CD4-positive, alpha-beta memory T cell (primary cell): ENCODE measurements at regions of chr19 and their contacts with region 1.

Region 1: GRCh38 chr19:2475702-2476450 is at the start of gene GADD45B:
- DNase-seq: peak; percentile 96 to 98 (median 96)
- H3K4me3 ChIP-seq: peak within 1 kb of the TSS; percentile 71 to 97
- H3K4me3 Mint-ChIP-seq: peak within 1 kb of the TSS; percentile 99 to 100 (median 100)
- H3K27ac ChIP-seq: peak within 1 kb of the TSS; percentile 76
- H3K27ac Mint-ChIP-seq: peak within 1 kb of the TSS; percentile 95 to 99 (median 97)
- H3K4me1 ChIP-seq: peaks cover 25% of the 10 kb centered on the region
- H3K4me1 Mint-ChIP-seq: peaks cover 6 to 36% (median 14%) of the 10 kb centered on the region in 4 donors
- H3K27me3 ChIP-seq: no peaks in the 10 kb centered on the region
- H3K27me3 Mint-ChIP-seq: no peaks in the 10 kb centered on the region
- total RNA-seq, gene GADD45B: 88.2 to 88.3 TPM

Region 2: GRCh38 chr19:2151339-2152229 is 324.3 kb before region 1 on chr19 and contains the start of gene AP3D1:
- CTCF ChIA-PET with region 1: no interaction called
- POLR2A ChIA-PET with region 1: interaction called, 3 read pairs
- intact Hi-C with region 1: loop called (anchors 5 kb)
- DNase-seq: peak; percentile 100
- H3K4me3 ChIP-seq: peak within 1 kb of the TSS; percentile 42 to 83
- H3K4me3 Mint-ChIP-seq: peak within 1 kb of the TSS; percentile 76 to 89 (median 84)
- H3K27ac ChIP-seq: peak within 1 kb of the TSS; percentile 94
- H3K27ac Mint-ChIP-seq: peak within 1 kb of the TSS; percentile 89 to 98 (median 95)
- H3K4me1 ChIP-seq: peaks cover 42% of the 10 kb centered on the region
- H3K4me1 Mint-ChIP-seq: peaks cover 23 to 43% (median 35%) of the 10 kb centered on the region in 4 donors
- H3K27me3 ChIP-seq: no peaks in the 10 kb centered on the region
- H3K27me3 Mint-ChIP-seq: no peaks in the 10 kb centered on the region
- total RNA-seq, gene AP3D1: 80.6 to 87.2 TPM

Region 3: DNA sequence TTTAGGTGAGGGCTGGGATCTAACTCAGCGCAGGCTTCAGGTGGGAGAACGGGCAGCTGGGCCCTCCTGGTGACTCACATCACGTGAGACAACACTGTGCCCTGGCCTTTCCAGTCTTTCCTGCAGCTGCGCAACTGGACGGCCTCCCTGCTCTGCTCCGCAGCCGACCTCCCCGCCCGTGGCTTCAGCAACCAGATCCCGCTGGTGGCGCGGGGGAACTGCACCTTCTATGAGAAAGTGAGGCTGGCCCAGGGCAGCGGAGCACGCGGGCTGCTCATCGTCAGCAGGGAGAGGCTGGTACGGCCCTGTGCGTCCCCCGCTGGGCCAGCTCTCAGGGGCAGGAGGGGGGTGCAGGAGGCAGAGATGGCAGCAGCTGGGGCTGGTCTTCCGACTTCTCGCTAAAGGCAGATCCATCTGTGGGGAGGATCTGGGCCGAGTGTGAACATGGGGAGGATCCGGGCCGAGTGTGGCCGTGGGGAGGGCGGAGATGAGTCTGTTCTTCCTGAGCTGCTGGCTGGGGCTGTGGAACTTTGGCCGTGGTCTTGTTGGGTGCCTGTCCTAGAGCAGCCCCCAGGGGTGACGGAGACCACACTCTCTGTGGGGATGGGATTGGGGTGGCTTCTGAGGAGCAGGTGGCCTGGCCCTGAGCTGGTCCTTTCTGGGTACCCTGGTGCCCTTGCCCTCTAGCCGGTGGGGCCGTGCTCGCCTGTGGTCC is 138.4 kb before region 1 on chr19:
- CTCF ChIA-PET with region 1: no interaction called
- POLR2A ChIA-PET with region 1: no interaction called
- intact Hi-C with region 1: no loop called
- DNase-seq: peak in 1 of 5 donors; percentile 35
- H3K4me3 ChIP-seq: no peak overlapping the region
- H3K4me3 Mint-ChIP-seq: no peak overlapping the region
- H3K27ac ChIP-seq: no peak overlapping the region
- H3K27ac Mint-ChIP-seq: no peak overlapping the region
- H3K4me1 ChIP-seq: peaks cover under 1% of the 10 kb centered on the region
- H3K4me1 Mint-ChIP-seq: peaks cover 7 to 15% (median 10%) of the 10 kb centered on the region in 4 donors
- H3K27me3 ChIP-seq: no peaks in the 10 kb centered on the region
- H3K27me3 Mint-ChIP-seq: no peaks in the 10 kb centered on the region

Region 4: GRCh38 chr19:2455851-2456570 is 19.9 kb before region 1 on chr19:
- CTCF ChIA-PET with region 1: no interaction called
- POLR2A ChIA-PET with region 1: interaction called, 45 read pairs
- intact Hi-C with region 1: loop called (anchors 2 kb)
- DNase-seq: peak in 4 of 5 donors; percentile 18 to 79 (median 34)
- H3K4me3 ChIP-seq: peak overlapping the region; percentile 34 to 70
- H3K4me3 Mint-ChIP-seq: peak overlapping the region; percentile 79 to 92 (median 86)
- H3K27ac ChIP-seq: peak overlapping the region; percentile 87
- H3K27ac Mint-ChIP-seq: peak overlapping the region; percentile 76 to 95 (median 87)
- H3K4me1 ChIP-seq: peaks cover 24% of the 10 kb centered on the region
- H3K4me1 Mint-ChIP-seq: peaks cover 6 to 23% (median 13%) of the 10 kb centered on the region in 4 donors
- H3K27me3 ChIP-seq: no peaks in the 10 kb centered on the region
- H3K27me3 Mint-ChIP-seq: no peaks in the 10 kb centered on the region

Region 5: DNA sequence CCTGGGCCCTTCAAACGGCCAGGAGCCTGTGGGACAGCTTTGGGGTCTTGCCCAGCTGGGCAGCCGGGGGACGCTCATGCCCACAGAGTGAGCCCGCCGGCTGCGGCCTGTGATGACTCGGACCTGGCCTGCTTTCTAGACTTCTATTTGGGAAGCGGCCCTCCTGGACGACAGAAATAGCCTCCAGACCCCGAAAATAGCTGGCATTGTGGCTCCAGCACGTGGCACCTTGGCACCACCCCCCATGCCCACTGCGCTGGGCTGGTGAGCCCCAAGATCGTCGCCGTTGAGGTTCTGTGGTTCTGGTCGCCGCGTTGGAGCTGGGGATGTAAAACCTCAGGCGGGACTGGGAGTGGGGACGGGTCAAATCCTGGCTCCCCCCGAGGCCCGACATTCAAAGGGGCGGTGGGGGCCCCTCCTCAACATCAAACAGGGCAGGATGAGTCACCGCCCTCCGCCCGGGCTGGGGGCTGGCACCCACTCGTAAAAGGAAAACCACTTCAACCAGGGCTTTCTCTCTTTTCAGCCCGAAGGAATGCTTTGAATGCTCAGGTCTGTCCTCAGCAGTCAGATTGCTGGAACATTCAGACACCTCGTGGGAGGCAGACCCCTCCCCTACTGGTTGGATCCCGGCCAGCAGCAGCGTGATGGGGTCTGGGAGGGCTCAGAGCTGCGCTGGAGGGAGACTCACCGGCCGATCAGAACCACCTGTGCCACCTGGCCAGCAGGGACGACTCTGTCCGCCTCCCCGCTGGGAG is 42.2 kb after region 1 on chr19:
- CTCF ChIA-PET with region 1: no interaction called
- POLR2A ChIA-PET with region 1: interaction called, 16 read pairs
- intact Hi-C with region 1: no loop called
- DNase-seq: no peak
- H3K4me3 ChIP-seq: no peak overlapping the region
- H3K4me3 Mint-ChIP-seq: no peak overlapping the region
- H3K27ac ChIP-seq: no peak overlapping the region
- H3K27ac Mint-ChIP-seq: peak overlapping the region in 1 of 7 donors; percentile 22
- H3K4me1 ChIP-seq: peaks cover 9% of the 10 kb centered on the region
- H3K4me1 Mint-ChIP-seq: peaks cover 0 to 10% (median 2%) of the 10 kb centered on the region in 4 donors
- H3K27me3 ChIP-seq: no peaks in the 10 kb centered on the region
- H3K27me3 Mint-ChIP-seq: no peaks in the 10 kb centered on the region

Region 6: DNA sequence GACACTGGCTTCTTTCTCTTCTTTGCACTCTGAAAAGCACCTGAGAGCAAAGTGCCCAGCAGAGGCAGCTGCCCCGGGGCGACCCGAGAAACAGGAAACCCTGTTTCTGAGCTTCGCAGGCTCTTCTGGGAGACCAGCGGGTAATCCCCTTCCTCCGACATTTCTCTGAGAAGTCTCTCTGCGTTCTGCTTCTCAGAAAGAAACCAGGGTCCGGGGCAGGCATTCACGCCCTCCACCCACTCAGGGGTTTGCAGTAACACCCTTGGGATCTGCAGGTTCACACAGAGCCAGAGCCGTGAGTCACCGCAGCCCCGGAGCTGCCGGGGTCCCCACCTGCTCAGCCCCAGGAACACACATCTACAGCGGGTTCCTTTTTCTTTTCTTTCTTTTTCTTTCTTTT is 86.0 kb after region 1 on chr19:
- CTCF ChIA-PET with region 1: interaction called, 8 read pairs
- POLR2A ChIA-PET with region 1: interaction called, 81 read pairs
- intact Hi-C with region 1: loop called (anchors 1 kb)
- DNase-seq: peak; percentile 60 to 81 (median 69)
- H3K4me3 ChIP-seq: peak overlapping the region; percentile 48 to 75
- H3K4me3 Mint-ChIP-seq: peak overlapping the region; percentile 90 to 98 (median 94)
- H3K27ac ChIP-seq: peak overlapping the region; percentile 64
- H3K27ac Mint-ChIP-seq: peak overlapping the region; percentile 93 to 97 (median 95)
- H3K4me1 ChIP-seq: peaks cover 15% of the 10 kb centered on the region
- H3K4me1 Mint-ChIP-seq: peaks cover 8 to 26% (median 14%) of the 10 kb centered on the region in 4 donors
- H3K27me3 ChIP-seq: no peaks in the 10 kb centered on the region
- H3K27me3 Mint-ChIP-seq: peaks cover 0 to 1% of the 10 kb centered on the region in 2 donors

Region 7: DNA sequence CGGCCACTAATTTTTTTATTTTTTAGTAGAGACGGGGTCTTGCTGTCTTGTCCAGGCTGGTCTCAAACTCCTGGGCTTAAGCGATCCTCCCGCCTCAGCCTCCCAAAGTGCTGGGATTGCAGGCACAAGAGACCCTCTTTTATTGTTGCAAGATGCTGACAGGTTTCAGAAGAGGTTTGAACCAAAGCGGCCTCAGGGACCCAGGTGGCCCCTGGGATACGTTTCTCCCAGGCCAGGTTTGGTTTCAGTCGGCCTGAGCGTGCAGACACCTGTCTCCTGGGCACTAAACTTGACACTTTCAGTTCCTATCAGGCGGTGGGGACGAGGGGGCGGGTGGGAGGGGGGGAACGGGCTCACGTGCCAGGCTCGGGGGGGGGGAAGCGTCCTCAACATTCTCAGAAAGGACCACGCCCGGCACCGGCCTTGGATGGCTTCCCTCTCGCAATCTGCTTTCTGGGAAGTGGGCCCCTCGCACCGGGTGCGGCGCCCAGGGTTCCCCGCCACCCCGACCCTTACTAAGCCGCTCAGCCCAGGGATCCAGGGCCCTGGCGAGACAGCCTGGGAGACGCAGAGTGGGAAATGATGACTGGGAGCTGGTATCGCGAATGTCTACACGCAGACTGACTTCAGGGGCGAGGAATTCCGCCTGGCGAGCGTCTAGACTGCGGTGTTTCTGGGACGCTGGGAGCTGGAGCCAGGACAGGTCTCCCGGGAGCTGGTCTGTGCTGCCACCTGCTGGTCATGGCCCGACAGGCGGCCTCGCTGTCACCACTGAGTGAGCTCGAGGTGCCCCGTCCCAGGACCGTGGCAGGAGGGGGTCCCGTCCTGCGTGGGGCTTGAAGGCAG is 135.0 kb after region 1 on chr19:
- CTCF ChIA-PET with region 1: interaction called, 123 read pairs
- POLR2A ChIA-PET with region 1: interaction called, 258 read pairs
- intact Hi-C with region 1: loop called (anchors 1 kb)
- DNase-seq: peak; percentile 76 to 87 (median 81)
- H3K4me3 ChIP-seq: peak overlapping the region in 1 of 2 donors; percentile 58
- H3K4me3 Mint-ChIP-seq: peak overlapping the region; percentile 79 to 92 (median 85)
- H3K27ac ChIP-seq: no peak overlapping the region
- H3K27ac Mint-ChIP-seq: peak overlapping the region; percentile 22 to 85 (median 73)
- H3K4me1 ChIP-seq: peaks cover 32% of the 10 kb centered on the region
- H3K4me1 Mint-ChIP-seq: peaks cover 18 to 49% (median 30%) of the 10 kb centered on the region in 4 donors
- H3K27me3 ChIP-seq: no peaks in the 10 kb centered on the region
- H3K27me3 Mint-ChIP-seq: peaks cover 2 to 7% of the 10 kb centered on the region in 2 donors

Region 8: DNA sequence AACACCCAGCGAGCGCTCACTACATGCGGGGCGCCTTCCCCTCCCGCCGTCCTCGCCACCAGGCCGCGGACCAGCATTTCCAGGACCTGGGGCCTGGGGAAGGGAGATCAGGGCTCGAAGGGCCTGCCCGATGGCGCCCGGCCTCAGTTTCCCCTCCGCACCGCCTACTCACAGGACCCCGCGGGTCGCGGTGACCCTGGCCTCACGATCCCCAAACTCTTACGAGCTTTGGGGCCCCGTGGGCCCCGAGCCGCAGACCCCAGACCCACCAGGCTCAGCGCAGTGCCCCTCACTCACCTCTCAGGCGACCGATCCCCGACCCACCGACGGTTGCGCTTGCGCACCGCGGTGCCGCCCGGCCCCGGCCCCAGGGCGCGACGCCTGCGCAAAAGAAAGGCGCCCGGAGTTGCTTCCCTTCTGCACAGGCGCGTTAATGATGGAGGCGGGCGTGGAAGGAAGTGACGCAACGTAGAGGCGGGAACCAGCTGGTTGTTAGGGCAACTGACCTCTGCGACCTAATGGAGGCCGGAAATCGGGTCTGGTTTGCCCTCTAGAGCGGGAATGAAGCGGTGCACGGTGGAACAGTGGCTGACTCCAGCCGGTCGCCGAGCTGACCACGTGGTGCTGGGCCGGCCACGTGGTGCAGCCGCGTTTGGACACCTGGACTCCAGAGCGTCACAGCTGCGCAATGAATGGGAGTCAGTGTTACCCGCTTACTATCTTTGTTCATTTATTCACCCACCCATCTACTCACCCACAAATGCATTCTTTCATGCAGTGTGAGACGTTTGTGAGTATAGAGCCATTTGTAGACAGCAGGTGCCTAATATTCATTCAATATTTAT is 307.3 kb after region 1 on chr19 and contains the start of gene SGTA:
- CTCF ChIA-PET with region 1: no interaction called
- POLR2A ChIA-PET with region 1: interaction called, 5 read pairs
- intact Hi-C with region 1: loop called (anchors 10 kb)
- DNase-seq: peak; percentile 94 to 98 (median 97)
- H3K4me3 ChIP-seq: peak within 1 kb of the TSS; percentile 85 to 91
- H3K4me3 Mint-ChIP-seq: peak within 1 kb of the TSS; percentile 84 to 93 (median 90)
- H3K27ac ChIP-seq: peak within 1 kb of the TSS; percentile 93
- H3K27ac Mint-ChIP-seq: peak within 1 kb of the TSS; percentile 87 to 97 (median 96)
- H3K4me1 ChIP-seq: peaks cover 54% of the 10 kb centered on the region
- H3K4me1 Mint-ChIP-seq: peaks cover 26 to 69% (median 47%) of the 10 kb centered on the region in 4 donors
- H3K27me3 ChIP-seq: no peaks in the 10 kb centered on the region
- H3K27me3 Mint-ChIP-seq: no peaks in the 10 kb centered on the region
- total RNA-seq, gene SGTA: 37.0 to 37.8 TPM

Region 9: DNA sequence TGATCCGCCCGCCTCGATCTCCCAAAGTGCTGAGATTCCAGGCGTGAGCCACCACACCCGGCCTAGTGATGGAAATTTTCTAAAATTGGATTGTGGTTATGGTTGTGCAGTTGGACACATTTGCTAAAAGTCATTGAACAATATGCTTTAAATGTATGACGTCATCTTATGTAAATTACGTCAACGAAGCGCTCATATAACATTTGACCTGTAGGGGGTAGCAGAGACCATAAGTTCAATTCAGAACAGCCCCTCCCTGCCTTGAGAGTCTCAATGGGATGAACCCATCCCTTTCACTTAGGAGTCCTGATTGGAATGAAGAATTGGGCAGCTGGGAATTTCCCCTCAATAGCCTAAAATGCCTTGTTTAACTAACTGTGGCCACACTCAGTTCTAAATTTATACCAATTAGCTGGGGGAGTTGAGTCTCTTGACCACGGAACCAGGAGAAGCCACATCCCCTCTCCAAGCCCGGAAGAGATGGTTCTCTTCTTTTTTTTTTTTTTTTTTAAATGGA is 486.2 kb after region 1 on chr19:
- CTCF ChIA-PET with region 1: no interaction called
- POLR2A ChIA-PET with region 1: no interaction called
- intact Hi-C with region 1: no loop called
- DNase-seq: peak; percentile 72 to 80 (median 77)
- H3K4me3 ChIP-seq: no peak overlapping the region
- H3K4me3 Mint-ChIP-seq: peak overlapping the region in 2 of 8 donors; percentile 16 to 17
- H3K27ac ChIP-seq: no peak overlapping the region
- H3K27ac Mint-ChIP-seq: peak overlapping the region; percentile 48 to 92 (median 85)
- H3K4me1 ChIP-seq: no peaks in the 10 kb centered on the region
- H3K4me1 Mint-ChIP-seq: peaks cover 4 to 6% (median 5%) of the 10 kb centered on the region in 4 donors
- H3K27me3 ChIP-seq: no peaks in the 10 kb centered on the region
- H3K27me3 Mint-ChIP-seq: no peaks in the 10 kb centered on the region